AG04450 (cell line): ENCODE measurements at regions of chr19 and their contacts with region 1.

Region 1: DNA sequence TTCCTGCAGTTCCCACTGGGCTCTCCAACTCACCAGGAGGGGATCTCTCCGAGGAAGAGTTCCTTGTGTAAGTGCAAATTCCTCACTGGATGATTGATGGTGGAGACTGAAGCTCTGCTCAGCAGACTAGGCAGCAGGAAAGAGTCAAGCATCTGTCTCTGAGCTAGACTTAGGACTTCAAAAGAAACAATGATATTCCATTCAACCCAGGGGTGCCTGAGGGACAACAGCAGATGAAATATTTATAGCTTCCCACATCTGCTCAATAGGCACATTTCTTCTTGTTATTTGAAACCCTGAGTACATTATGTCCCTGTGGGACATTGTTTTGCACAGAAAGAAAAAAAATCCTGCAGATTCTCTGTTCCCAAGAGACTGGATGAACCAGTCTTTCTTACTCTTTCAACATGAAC is at the starts of genes OR7A5 and OR7C1:
- DNase-seq: no peak
- H3K4me3 ChIP-seq: no peak within 1 kb of the TSS
- H3K27ac ChIP-seq: no peak within 1 kb of the TSS
- H3K27me3 ChIP-seq: peaks cover 3% of the 10 kb centered on the region
- CTCF ChIP-seq: no peak
- polyA plus RNA-seq, gene OR7A5: not detected in 2 replicates
- polyA plus RNA-seq, gene OR7C1: not detected in 2 replicates

Region 2: DNA sequence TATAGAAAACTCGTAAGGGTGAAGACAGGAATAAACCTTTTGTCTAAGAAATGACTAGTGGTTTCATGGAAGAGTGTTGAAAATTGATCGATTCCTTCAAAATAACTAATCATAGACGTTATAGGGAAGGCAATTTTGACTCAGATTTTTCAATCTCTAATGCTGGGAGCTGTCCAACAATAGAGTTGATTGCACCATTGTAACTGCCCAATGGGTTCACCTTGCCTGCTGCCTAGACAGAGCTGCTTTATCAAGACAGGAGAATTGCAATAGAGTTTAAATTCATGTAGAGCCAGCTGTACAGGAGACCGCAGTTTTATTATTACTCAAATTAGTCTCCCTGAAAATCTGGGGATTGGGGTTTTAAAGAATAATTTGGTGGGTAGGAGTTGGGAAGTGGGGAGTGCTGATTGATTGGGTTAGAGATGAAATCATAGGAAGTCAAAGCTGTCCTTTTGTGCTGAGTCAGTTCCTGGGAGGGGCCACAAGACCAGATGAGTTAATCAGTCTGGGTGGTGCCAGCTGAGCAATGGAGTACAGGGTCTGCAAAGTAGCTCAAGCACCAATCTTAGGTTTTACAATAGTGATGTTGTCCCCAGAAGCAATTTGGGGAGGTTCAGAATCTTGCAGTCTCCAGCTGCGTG is 39.8 kb before region 1 on chr19:
- CTCF ChIA-PET with region 1: no interaction called
- POLR2A ChIA-PET with region 1: interaction called, 12 read pairs
- DNase-seq: no peak
- H3K4me3 ChIP-seq: no peak overlapping the region
- H3K27ac ChIP-seq: no peak overlapping the region
- H3K27me3 ChIP-seq: no peaks in the 10 kb centered on the region
- CTCF ChIP-seq: no peak

Region 3: GRCh38 chr19:15717809-15718208 is 882.8 kb after region 1 on chr19:
- CTCF ChIA-PET with region 1: no interaction called
- POLR2A ChIA-PET with region 1: no interaction called
- DNase-seq: no peak
- H3K4me3 ChIP-seq: no peak overlapping the region
- H3K27ac ChIP-seq: no peak overlapping the region
- H3K27me3 ChIP-seq: no peaks in the 10 kb centered on the region
- CTCF ChIP-seq: no peak